ENCODE measurements at regions of chr9 and their contacts with region 1.

Region 1: DNA sequence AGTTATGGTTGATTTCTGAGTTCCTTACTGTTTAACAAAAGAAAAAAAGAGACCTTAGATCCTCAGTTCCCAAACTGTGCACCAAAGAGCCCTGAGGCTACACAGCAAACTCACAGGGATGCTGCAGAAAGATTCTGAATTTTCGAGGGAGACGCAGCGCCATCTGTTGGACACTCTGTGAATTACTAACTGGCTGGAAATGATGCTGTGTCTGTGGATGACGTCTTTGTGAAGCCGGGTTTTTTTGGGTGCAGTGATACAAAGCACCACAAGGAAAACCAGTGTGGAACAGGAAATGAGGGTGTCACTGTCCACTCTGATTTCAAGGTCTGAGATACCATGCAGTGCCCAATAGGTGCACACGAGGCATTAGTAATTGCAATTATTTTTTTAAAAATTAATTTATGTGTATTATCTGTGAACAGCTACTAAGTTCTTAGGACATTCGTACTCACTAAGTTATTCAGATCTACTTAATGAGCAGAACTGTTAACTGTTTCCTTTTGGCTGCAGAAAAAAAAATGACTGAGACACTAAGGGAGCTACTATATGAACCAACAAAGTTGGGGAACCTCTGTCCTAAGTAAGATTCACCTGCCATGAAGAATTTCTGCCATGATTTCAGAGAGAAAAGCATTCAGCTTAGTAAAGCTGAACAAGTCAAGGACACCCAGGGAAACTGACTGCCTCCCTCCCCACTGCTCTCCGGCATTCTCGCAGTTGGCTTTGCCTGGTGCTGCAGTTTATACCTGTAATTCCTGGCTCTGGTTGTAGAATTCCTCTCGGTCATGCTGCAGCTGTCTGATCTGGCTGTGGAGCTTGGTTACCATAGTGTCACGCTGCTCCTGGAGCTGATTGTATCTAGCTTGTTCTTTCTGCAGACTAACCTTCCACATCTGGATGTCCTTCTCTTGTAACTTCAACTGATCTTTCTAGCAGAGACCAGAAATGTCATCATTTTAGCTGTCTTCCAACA is 23.4 kb downstream of the SPACA9 start:
- DNase-seq: peak; percentile 83
- ATAC-seq: peak; percentile 99
- H3K4me3 ChIP-seq: no peak overlapping the region
- H3K27ac ChIP-seq: no peak overlapping the region
- H3K4me1 ChIP-seq: no peaks in the 10 kb centered on the region
- H3K27me3 ChIP-seq: no peaks in the 10 kb centered on the region
- CTCF ChIP-seq: peak; percentile 88
- POLR2A ChIP-seq: no peak
- RAD21 ChIP-seq: peak; percentile 63

Region 2: GRCh38 chr9:132973713-132974112 is 71.6 kb after region 1 on chr9:
- CTCF ChIA-PET with region 1: interaction called, 4 read pairs
- POLR2A ChIA-PET with region 1: no interaction called
- dilution Hi-C with region 1: no loop called
- in situ Hi-C with region 1: no loop called
- intact Hi-C with region 1: loop called (anchors 5 kb)
- DNase-seq: peak; percentile 18
- ATAC-seq: no peak; the same call in 1 of the 2 replicates
- H3K4me3 ChIP-seq: no peak overlapping the region
- H3K27ac ChIP-seq: no peak overlapping the region
- H3K4me1 ChIP-seq: no peaks in the 10 kb centered on the region
- H3K27me3 ChIP-seq: peaks cover 51% of the 10 kb centered on the region
- CTCF ChIP-seq: no peak
- POLR2A ChIP-seq: no peak
- RAD21 ChIP-seq: no peak